MCF 10A (cell line): ENCODE measurements at regions of chr1 and their contacts with region 1.

Region 1: GRCh38 chr1:204398217-204399081 is 13.2 kb downstream of the PPP1R15B start:
- DNase-seq: peak; percentile 97
- H3K4me3 Mint-ChIP-seq: no peak overlapping the region
- H3K27ac Mint-ChIP-seq: peak overlapping the region; percentile 84
- H3K4me1 Mint-ChIP-seq: no peaks in the 10 kb centered on the region
- H3K27me3 Mint-ChIP-seq: no peaks in the 10 kb centered on the region
- CTCF ChIP-seq: peak; percentile 98

Region 2: GRCh38 chr1:203898458-203899244 is 499.8 kb before region 1 on chr1:
- CTCF ChIA-PET with region 1: no interaction called
- POLR2A ChIA-PET with region 1: no interaction called
- intact Hi-C with region 1: no loop called
- DNase-seq: no peak
- H3K4me3 Mint-ChIP-seq: no peak overlapping the region
- H3K27ac Mint-ChIP-seq: no peak overlapping the region
- H3K4me1 Mint-ChIP-seq: no peaks in the 10 kb centered on the region
- H3K27me3 Mint-ChIP-seq: no peaks in the 10 kb centered on the region
- CTCF ChIP-seq: no peak

Region 3: GRCh38 chr1:204089044-204089751 is 309.3 kb before region 1 on chr1:
- CTCF ChIA-PET with region 1: no interaction called
- POLR2A ChIA-PET with region 1: no interaction called
- intact Hi-C with region 1: no loop called
- DNase-seq: peak; percentile 36
- H3K4me3 Mint-ChIP-seq: no peak overlapping the region
- H3K27ac Mint-ChIP-seq: peak overlapping the region; percentile 81
- H3K4me1 Mint-ChIP-seq: peaks cover 43% of the 10 kb centered on the region
- H3K27me3 Mint-ChIP-seq: no peaks in the 10 kb centered on the region
- CTCF ChIP-seq: no peak

Region 4: DNA sequence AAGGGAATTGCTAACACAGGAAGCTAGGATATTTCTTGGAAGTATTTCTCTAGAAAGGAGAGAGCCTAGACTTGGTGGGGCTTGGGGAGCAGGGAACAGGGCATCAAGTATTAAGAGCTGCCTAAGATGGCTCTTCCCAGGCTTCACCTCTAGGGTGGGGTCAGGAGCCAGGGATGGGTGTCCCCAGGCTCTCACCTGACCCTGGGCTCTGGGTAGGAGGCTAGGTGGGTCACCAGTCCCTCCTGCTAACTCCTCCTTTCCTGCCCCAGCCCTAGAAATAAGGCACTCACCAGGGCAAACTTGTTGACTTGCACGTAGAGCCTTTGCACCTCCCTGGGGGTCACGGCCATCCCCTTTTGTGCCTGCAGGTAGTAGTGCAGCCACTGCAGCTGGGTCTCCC is 261.6 kb before region 1 on chr1:
- CTCF ChIA-PET with region 1: interaction called, 12 read pairs
- POLR2A ChIA-PET with region 1: no interaction called
- intact Hi-C with region 1: no loop called
- DNase-seq: no peak
- H3K4me3 Mint-ChIP-seq: no peak overlapping the region
- H3K27ac Mint-ChIP-seq: no peak overlapping the region
- H3K4me1 Mint-ChIP-seq: peaks cover 8% of the 10 kb centered on the region
- H3K27me3 Mint-ChIP-seq: no peaks in the 10 kb centered on the region
- CTCF ChIP-seq: no peak

Region 5: GRCh38 chr1:204213668-204214662 is 184.5 kb before region 1 on chr1 and contains the start of gene GOLT1A:
- CTCF ChIA-PET with region 1: interaction called, 16 read pairs
- POLR2A ChIA-PET with region 1: interaction called, 15 read pairs
- intact Hi-C with region 1: loop called (anchors 1 kb)
- DNase-seq: peak; percentile 93
- H3K4me3 Mint-ChIP-seq: peak within 1 kb of the TSS; percentile 68
- H3K27ac Mint-ChIP-seq: peak within 1 kb of the TSS; percentile 8
- H3K4me1 Mint-ChIP-seq: peaks cover 6% of the 10 kb centered on the region
- H3K27me3 Mint-ChIP-seq: no peaks in the 10 kb centered on the region
- CTCF ChIP-seq: peak; percentile 93
- total RNA-seq, gene GOLT1A: 11.5 and 12.7 TPM in 2 replicates

Region 6: GRCh38 chr1:204368996-204369726 is 29.3 kb before region 1 on chr1:
- CTCF ChIA-PET with region 1: interaction called, 83 read pairs
- POLR2A ChIA-PET with region 1: interaction called, 11 read pairs
- intact Hi-C with region 1: no loop called
- DNase-seq: no peak
- H3K4me3 Mint-ChIP-seq: no peak overlapping the region
- H3K27ac Mint-ChIP-seq: no peak overlapping the region
- H3K4me1 Mint-ChIP-seq: no peaks in the 10 kb centered on the region
- H3K27me3 Mint-ChIP-seq: no peaks in the 10 kb centered on the region
- CTCF ChIP-seq: no peak

Region 7: GRCh38 chr1:204417231-204417997 is 19.0 kb after region 1 on chr1:
- CTCF ChIA-PET with region 1: interaction called, 16 read pairs
- POLR2A ChIA-PET with region 1: interaction called, 25 read pairs
- intact Hi-C with region 1: no loop called
- DNase-seq: peak; percentile 100
- H3K4me3 Mint-ChIP-seq: peak overlapping the region; percentile 65
- H3K27ac Mint-ChIP-seq: peak overlapping the region; percentile 91
- H3K4me1 Mint-ChIP-seq: peaks cover 48% of the 10 kb centered on the region
- H3K27me3 Mint-ChIP-seq: no peaks in the 10 kb centered on the region
- CTCF ChIP-seq: no peak

Region 8: GRCh38 chr1:204494281-204495077 is 96.0 kb after region 1 on chr1 and contains the start of gene PIK3C2B:
- CTCF ChIA-PET with region 1: interaction called, 58 read pairs
- POLR2A ChIA-PET with region 1: interaction called, 15 read pairs
- intact Hi-C with region 1: no loop called
- DNase-seq: peak; percentile 92
- H3K4me3 Mint-ChIP-seq: peak within 1 kb of the TSS; percentile 86
- H3K27ac Mint-ChIP-seq: peak within 1 kb of the TSS; percentile 24
- H3K4me1 Mint-ChIP-seq: peaks cover 26% of the 10 kb centered on the region
- H3K27me3 Mint-ChIP-seq: peaks cover 41% of the 10 kb centered on the region
- CTCF ChIP-seq: peak; percentile 93
- total RNA-seq, gene PIK3C2B: 3.4 and 4.4 TPM in 2 replicates

Region 9: DNA sequence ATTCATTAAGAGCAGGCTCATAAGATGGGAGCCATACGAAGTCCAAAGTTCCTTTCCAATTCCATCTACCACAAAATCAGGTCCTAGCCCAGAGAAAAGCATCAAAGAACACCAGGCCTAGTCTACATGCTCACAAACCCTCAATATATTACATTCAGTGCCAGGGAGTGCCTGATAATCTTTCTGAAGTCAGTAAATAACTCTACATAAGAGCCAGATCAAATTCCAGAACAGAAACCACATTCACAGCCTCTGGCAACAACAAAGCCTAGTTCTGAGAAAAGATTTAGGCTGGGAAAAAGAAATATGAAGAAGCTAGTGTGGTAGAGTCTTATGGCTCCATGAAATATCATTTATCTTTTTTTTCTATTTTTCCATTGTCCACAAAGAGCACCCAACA is 763.9 kb after region 1 on chr1:
- CTCF ChIA-PET with region 1: no interaction called
- POLR2A ChIA-PET with region 1: no interaction called
- intact Hi-C with region 1: no loop called
- DNase-seq: no peak
- H3K4me3 Mint-ChIP-seq: no peak overlapping the region
- H3K27ac Mint-ChIP-seq: no peak overlapping the region
- H3K4me1 Mint-ChIP-seq: no peaks in the 10 kb centered on the region
- H3K27me3 Mint-ChIP-seq: no peaks in the 10 kb centered on the region
- CTCF ChIP-seq: no peak